Common myeloid progenitor, CD34-positive (primary cell): ENCODE measurements at regions of chr13 and their contacts with region 1.

Region 1: DNA sequence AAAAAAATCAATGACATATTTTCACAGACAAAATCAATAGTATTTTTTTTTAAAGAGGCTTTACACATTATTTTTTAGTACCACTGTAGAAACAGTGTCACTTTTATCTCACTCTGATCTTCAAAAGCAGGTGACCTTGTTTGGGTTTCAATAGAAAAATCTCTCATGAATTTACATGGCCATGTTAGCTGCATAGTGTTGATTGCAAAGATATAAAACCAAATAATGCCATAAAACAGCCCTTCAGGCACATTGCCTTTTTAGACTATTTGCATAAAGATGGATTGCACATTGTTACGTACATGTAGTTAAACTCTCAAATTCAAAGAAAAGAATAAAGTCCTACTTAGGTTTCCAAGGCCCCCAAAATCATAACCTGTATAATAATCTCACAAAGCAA is 492.0 kb upstream of the MIR17HG start:
- DNase-seq: no peak
- H3K4me3 ChIP-seq: no peak overlapping the region
- H3K27ac ChIP-seq: no peak overlapping the region
- H3K4me1 ChIP-seq: no peaks in the 10 kb centered on the region
- H3K27me3 ChIP-seq: no peaks in the 10 kb centered on the region

Region 2: DNA sequence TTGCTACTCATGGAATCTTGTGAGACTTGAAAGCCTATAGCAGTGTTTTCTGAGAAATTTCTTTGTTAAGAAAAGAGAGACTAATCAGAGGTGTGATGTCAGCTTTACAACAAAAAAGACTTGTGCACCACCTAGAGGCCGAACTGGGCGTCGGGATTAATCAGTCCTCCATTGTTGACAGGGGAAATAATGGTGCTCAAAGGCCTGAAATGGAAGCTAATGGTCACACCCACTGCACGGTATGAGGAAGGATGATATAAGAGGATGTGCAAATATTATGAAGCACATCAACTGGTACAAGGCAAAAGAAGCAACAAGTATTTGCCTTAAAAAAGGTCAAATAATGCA is 11.8 kb after region 1 on chr13:
- CTCF ChIA-PET with region 1: interaction called, 10 read pairs
- POLR2A ChIA-PET with region 1: no interaction called
- DNase-seq: peak; percentile 84 to 93 (median 86)
- H3K4me3 ChIP-seq: no peak overlapping the region
- H3K27ac ChIP-seq: no peak overlapping the region
- H3K4me1 ChIP-seq: peaks cover 0 to 2% (median 0%) of the 10 kb centered on the region in 4 experiments
- H3K27me3 ChIP-seq: no peaks in the 10 kb centered on the region